Caco-2 (cell line): ENCODE measurements at regions of chr2 and their contacts with region 1.

Region 1: GRCh38 chr2:101998896-101999789 is 7.4 kb downstream of the IL1R2 start:
- DNase-seq: peak; percentile 77 to 82
- H3K4me3 ChIP-seq: peak overlapping the region; percentile 21
- H3K4me3 Mint-ChIP-seq: peak overlapping the region; percentile 61
- H3K27ac Mint-ChIP-seq: peak overlapping the region; percentile 58
- H3K4me1 ChIP-seq: peaks cover 49% of the 10 kb centered on the region
- H3K4me1 Mint-ChIP-seq: peaks cover 7% of the 10 kb centered on the region
- H3K27me3 ChIP-seq: no peaks in the 10 kb centered on the region
- H3K27me3 Mint-ChIP-seq: no peaks in the 10 kb centered on the region
- CTCF ChIP-seq: peak in 1 of 2 experiments; percentile 24

Region 2: GRCh38 chr2:101883863-101884262 is 115.3 kb before region 1 on chr2:
- CTCF ChIA-PET with region 1: interaction called, 10 read pairs
- POLR2A ChIA-PET with region 1: no interaction called
- intact Hi-C with region 1: no loop called
- DNase-seq: peak in 1 of 2 experiments; percentile 62
- H3K4me3 ChIP-seq: no peak overlapping the region
- H3K4me3 Mint-ChIP-seq: no peak overlapping the region
- H3K27ac Mint-ChIP-seq: no peak overlapping the region
- H3K4me1 ChIP-seq: no peaks in the 10 kb centered on the region
- H3K4me1 Mint-ChIP-seq: peaks cover 7% of the 10 kb centered on the region
- H3K27me3 ChIP-seq: no peaks in the 10 kb centered on the region
- H3K27me3 Mint-ChIP-seq: no peaks in the 10 kb centered on the region
- CTCF ChIP-seq: peak; percentile 63 to 73

Region 3: DNA sequence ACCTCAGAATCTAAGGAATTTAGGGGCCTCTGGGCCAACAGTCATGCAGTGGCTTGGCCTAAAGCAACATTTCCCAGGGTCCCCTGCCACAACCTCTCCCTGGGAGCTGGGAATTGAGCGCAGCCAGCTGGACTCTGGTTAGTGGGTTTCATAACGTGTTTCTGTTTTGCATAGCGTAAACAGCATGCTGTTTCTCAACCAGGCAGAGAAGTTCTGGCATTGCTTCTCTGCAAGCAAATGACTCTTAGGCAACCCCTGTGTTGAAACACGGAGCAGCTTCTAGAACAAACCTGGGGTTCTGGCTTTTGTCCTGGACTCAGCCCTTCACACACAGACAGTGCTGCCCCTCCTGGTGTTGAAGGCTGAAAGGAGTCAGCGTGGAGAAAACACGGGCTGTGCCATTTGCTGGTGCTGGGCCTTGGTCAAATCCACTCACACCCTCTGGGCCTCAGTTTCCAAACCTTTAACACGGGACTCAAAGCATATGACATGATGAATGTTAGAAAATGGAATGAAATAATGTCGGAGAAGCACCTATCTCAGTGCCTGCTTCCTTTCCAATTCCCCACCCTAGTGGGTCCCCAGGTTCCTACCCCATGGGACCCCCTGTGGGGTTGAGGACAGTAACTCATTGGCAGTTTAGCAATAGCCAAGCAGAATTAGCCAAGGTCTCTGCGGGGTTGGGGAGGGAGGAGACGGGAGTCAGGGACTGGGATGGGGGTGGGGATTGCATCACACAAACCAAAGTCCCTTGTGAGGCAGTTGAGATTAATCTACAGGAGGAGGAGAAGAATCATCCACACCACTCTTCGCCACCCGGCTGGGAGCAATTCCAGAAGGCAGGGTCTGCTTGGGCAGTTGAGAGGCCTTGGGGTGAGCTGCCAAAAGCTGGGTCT is 37.6 kb before region 1 on chr2:
- CTCF ChIA-PET with region 1: no interaction called
- POLR2A ChIA-PET with region 1: no interaction called
- intact Hi-C with region 1: loop called (anchors 1 kb)
- DNase-seq: peak; percentile 43 to 59
- H3K4me3 ChIP-seq: no peak overlapping the region
- H3K4me3 Mint-ChIP-seq: no peak overlapping the region
- H3K27ac Mint-ChIP-seq: no peak overlapping the region
- H3K4me1 ChIP-seq: peaks cover 17% of the 10 kb centered on the region; the same call in 1 of the 2 replicates
- H3K4me1 Mint-ChIP-seq: no peaks in the 10 kb centered on the region
- H3K27me3 ChIP-seq: no peaks in the 10 kb centered on the region
- H3K27me3 Mint-ChIP-seq: no peaks in the 10 kb centered on the region
- CTCF ChIP-seq: no peak